Activated naive CD4-positive, alpha-beta T cell treated with anti-CD3 and anti-CD28 coated beads, Interleukin-2, amount 10 ng/mL, durations not matched to agents 7 days and 5 days (primary cell): ENCODE measurements at regions of chr4 and their contacts with region 1.

Region 1: GRCh38 chr4:56977321-56978012 is at the start of gene NOA1:
- DNase-seq: peak; percentile 98
- H3K4me3 Mint-ChIP-seq: peak within 1 kb of the TSS; percentile 95
- H3K27ac Mint-ChIP-seq: peak within 1 kb of the TSS; percentile 97
- H3K4me1 Mint-ChIP-seq: peaks cover 57% of the 10 kb centered on the region
- H3K27me3 Mint-ChIP-seq: no peaks in the 10 kb centered on the region

Region 2: GRCh38 chr4:56908206-56909085 is 69.0 kb before region 1 on chr4:
- CTCF ChIA-PET with region 1: interaction called, 10 read pairs
- DNase-seq: peak; percentile 77
- H3K4me3 Mint-ChIP-seq: peak overlapping the region; percentile 87
- H3K27ac Mint-ChIP-seq: peak overlapping the region; percentile 96
- H3K4me1 Mint-ChIP-seq: peaks cover 43% of the 10 kb centered on the region
- H3K27me3 Mint-ChIP-seq: peaks cover 7% of the 10 kb centered on the region

Region 3: DNA sequence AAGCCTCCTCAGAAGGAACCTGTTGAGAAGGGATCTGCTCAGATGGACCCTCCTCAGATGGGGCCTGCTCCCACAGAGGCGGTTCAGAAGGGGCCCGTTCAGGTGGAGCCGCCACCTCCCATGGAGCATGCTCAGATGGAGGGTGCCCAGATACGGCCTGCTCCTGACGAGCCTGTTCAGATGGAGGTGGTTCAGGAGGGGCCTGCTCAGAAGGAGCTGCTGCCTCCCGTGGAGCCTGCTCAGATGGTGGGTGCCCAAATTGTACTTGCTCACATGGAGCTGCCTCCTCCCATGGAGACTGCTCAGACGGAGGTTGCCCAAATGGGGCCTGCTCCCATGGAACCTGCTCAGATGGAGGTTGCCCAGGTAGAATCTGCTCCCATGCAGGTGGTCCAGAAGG is 46.8 kb before region 1 on chr4:
- CTCF ChIA-PET with region 1: no interaction called
- DNase-seq: no peak
- H3K4me3 Mint-ChIP-seq: no peak overlapping the region
- H3K27ac Mint-ChIP-seq: no peak overlapping the region
- H3K4me1 Mint-ChIP-seq: peaks cover 8% of the 10 kb centered on the region
- H3K27me3 Mint-ChIP-seq: no peaks in the 10 kb centered on the region

Region 4: DNA sequence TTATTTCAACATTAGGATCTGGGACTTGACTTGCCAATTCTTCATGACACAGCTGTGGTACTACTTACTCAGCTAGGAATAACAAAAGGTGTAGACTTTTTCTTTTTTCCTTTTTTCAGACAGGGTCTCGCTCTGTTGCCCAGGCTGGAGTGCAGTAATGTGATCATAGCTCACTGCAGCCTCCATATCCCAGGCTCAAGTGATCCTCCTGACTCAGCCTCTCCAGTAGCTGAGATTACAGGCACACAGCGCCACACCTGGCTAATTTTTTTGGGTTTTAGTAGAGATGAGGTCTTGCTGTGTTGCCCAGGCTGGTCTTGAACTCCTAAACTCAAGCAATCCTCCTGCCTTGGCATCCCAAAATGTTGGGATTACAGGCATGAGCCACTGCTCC is 16.4 kb before region 1 on chr4:
- CTCF ChIA-PET with region 1: interaction called, 10 read pairs
- DNase-seq: no peak
- H3K4me3 Mint-ChIP-seq: no peak overlapping the region
- H3K27ac Mint-ChIP-seq: no peak overlapping the region
- H3K4me1 Mint-ChIP-seq: no peaks in the 10 kb centered on the region
- H3K27me3 Mint-ChIP-seq: no peaks in the 10 kb centered on the region